Calu3 (cell line): ENCODE measurements at regions of chr2 and their contacts with region 1.

Region 1: DNA sequence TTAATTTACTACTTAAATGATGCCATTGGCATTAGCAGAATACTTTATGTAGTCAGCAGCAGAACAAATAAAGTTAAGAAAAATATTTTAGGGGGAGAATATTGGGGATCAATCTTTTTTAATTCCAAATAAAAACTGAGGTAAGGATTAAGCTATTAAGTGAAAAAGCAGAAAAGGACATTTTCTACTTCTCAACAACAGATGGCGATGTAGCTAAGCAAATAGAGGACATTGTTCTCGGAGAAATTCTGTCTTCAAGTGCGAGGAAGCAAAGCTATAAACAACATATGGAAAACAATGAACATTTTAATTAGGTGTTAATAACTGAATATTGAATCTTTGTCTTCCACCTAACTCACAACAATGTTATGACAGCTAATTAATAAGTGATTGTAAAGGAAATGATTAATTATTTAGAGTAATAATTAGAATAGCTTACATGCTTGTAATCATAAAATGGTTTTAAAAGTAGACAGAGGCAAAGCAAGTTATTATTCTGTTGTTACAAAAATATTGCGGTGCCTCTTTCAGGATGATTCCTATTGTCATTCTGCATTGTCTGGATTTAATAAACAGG is 32.9 kb upstream of the CCDC93 start:
- DNase-seq: no peak
- H3K4me3 Mint-ChIP-seq: peak overlapping the region; percentile 9
- H3K27ac Mint-ChIP-seq: peak overlapping the region; percentile 30
- H3K4me1 Mint-ChIP-seq: peaks cover 67% of the 10 kb centered on the region
- H3K27me3 Mint-ChIP-seq: no peaks in the 10 kb centered on the region
- CTCF ChIP-seq: peak; percentile 38

Region 2: DNA sequence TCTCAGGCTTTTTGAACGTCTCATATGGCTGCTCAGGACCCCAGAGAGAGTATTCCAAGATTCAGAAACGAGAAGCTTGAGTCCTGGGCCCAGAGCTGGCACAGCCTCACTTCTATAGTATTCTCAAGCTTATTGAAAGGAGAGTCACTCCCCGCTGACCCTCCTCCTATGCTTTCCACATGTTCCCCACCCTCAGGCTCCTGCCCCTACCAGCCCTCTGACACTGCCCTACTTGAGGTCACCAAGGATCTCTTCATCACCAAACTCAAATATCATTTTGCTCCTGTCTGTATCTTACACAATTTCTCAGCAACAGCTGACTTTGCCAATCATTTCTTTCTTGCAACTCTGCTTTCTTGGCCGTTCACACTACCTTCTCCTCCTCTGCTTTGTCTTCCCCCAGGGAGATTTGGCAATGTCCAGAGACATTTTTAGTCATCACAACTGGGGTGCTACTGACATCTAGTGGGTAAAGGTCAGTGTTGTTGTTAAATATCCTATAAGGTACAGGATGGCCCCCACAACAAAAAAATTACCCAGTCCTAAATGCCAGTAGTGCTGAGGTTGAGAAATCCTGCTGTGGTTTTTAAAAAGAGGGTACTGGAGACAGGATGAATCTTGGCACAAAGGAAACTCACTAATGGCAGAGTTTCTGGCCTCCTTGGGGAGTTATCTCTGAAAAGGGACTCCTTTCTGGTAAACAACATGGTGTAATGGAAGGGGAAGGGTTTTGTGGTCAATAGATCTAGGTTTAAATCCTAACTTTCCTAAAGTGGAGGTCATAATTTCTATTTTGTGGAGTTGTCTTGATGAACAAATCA is 14.6 kb after region 1 on chr2:
- CTCF ChIA-PET with region 1: interaction called, 7 read pairs
- intact Hi-C with region 1: loop called (anchors 1 kb)
- DNase-seq: peak; percentile 52
- H3K4me3 Mint-ChIP-seq: no peak overlapping the region
- H3K27ac Mint-ChIP-seq: no peak overlapping the region
- H3K4me1 Mint-ChIP-seq: peaks cover 48% of the 10 kb centered on the region
- H3K27me3 Mint-ChIP-seq: no peaks in the 10 kb centered on the region
- CTCF ChIP-seq: peak; percentile 42

Region 3: DNA sequence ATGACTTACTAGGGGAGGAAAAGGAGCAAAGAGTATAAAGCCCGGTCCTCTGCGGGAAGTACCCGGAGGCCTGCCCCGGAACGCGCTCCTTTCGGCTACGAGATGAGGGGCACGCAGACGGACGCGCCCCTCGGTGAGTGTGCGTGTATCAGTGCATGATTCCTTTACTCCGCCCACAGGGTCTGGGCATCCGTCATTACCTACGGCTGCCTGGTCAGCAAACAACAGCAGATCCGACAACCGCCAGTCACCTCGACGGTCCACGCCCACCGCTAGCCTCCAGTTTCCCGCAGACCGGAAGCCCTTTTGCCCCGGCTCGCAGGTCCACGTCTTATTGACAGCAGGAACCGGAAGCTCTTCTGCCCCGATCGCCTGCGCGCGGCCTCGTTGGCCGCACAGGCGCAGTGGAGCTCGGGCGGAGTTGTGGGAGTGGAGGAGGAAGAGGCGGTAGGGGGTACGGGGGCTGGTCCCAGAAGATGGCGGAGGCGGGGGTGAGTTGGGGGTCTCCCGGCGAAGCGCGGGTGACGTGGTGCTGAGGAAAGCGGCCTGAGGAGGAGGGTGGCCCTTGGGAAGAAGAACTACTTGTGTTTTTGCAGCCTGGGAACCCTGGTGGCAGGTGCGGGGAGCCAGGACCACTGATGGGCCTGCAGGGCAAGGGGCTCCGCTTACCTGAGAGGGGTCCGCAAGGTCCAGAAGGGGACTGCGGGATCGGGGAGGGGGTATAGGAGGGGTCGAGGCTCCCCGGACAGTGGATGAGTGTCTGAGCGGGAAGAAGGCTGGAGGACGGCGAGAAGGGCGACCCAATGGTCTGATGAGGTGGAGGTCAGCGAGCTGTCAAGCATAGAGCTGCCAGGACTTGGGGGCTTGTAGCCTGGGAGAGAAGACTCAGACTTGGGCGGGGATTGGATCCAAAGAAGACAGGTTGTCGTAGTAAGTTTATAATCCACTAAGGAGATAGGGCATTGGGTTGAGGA is 41.6 kb after region 1 on chr2 and contains the start of gene INSIG2:
- CTCF ChIA-PET with region 1: interaction called, 13 read pairs
- intact Hi-C with region 1: loop called (anchors 1 kb)
- DNase-seq: peak; percentile 97
- H3K4me3 Mint-ChIP-seq: peak within 1 kb of the TSS; percentile 95
- H3K27ac Mint-ChIP-seq: peak within 1 kb of the TSS; percentile 76
- H3K4me1 Mint-ChIP-seq: peaks cover 32% of the 10 kb centered on the region
- H3K27me3 Mint-ChIP-seq: no peaks in the 10 kb centered on the region
- CTCF ChIP-seq: no peak
- total RNA-seq, gene INSIG2: 64.4 and 67.1 TPM in 2 replicates

Region 4: DNA sequence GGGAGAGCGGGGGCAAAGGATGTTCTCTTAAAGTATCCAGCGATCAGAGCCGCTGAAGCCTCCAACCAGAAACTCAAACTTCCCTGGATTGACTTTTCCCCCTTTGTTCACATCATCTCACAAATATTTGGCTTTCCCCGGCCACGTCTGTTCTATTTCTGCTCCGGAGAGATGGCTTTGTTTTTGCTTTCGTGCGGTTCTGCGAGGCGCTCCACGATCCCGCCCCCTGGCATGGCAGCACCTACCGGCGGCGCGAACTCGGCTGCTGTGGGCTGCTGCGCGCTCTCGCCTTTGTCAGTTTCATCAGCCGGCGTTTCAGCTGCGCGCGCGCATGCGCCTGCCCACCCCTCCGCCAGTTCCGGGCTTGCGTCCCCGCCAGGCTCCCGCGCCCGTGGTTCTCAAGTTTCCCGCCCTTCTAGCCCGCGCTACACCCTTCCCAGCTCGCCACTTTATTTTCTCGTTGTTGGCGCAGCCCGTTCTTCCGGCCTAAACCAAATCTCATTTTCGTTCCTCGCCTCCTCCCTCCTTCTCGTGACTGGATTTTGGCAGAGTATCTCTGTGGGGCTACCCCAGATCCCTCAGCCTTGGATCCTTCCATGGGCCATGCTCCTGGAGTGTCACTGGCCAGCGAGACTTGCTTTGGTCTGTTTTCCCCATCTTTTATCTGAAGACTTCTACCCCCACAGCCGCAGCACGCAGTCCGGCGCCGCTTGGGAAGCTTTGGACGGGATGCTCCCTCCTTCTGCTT is 139.6 kb after region 1 on chr2:
- CTCF ChIA-PET with region 1: interaction called, 6 read pairs
- intact Hi-C with region 1: loop called (anchors 5 kb)
- DNase-seq: peak; percentile 90
- H3K4me3 Mint-ChIP-seq: peak overlapping the region; percentile 85
- H3K27ac Mint-ChIP-seq: peak overlapping the region; percentile 91
- H3K4me1 Mint-ChIP-seq: peaks cover 43% of the 10 kb centered on the region
- H3K27me3 Mint-ChIP-seq: no peaks in the 10 kb centered on the region
- CTCF ChIP-seq: no peak

Region 5: GRCh38 chr2:118221666-118222594 is 175.2 kb after region 1 on chr2:
- CTCF ChIA-PET with region 1: interaction called, 8 read pairs
- intact Hi-C with region 1: loop called (anchors 2 kb)
- DNase-seq: peak; percentile 71
- H3K4me3 Mint-ChIP-seq: no peak overlapping the region
- H3K27ac Mint-ChIP-seq: peak overlapping the region; percentile 65
- H3K4me1 Mint-ChIP-seq: peaks cover 25% of the 10 kb centered on the region
- H3K27me3 Mint-ChIP-seq: no peaks in the 10 kb centered on the region
- CTCF ChIP-seq: peak; percentile 57

Region 6: DNA sequence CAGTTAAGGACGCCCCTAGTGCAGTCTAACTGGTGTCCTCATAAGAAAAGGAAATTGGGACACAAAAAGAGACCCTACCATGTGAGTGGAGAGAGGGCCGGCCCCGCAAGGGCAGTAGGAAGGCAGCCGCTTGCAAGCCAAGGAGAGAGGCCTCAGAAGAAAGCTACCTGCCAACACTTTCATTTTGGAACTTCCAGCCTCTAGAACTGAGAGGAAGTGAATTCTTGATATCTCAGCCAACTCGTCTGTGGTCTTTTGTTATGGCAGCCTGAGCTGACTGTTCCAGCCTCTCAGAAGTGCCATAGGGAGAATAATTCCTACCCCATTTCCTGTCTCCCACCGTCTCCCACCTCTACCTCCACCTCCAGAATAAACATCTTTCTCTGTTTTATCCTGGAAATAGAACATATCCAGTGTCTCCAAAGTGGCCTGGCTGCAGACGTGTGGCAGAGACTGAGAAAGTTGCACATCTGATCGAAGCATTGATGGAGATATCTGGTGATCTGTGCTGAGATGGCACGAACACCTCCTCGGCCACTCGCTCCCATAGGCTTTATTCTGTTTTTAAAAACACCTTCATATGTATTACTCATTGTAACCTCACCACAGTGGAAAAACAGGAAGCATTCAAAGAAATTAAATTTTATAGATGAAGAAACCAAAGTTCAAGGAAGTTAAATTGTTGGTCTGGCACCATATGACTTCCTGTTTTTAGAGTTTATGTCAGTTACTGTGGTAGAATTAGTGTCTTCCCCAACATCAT is 855.7 kb after region 1 on chr2:
- CTCF ChIA-PET with region 1: no interaction called
- intact Hi-C with region 1: no loop called
- DNase-seq: no peak
- H3K4me3 Mint-ChIP-seq: no peak overlapping the region
- H3K27ac Mint-ChIP-seq: no peak overlapping the region
- H3K4me1 Mint-ChIP-seq: no peaks in the 10 kb centered on the region
- H3K27me3 Mint-ChIP-seq: peaks cover 35% of the 10 kb centered on the region
- CTCF ChIP-seq: no peak